Calu3 (cell line): ENCODE measurements at regions of chr9 and their contacts with region 1.

Region 1: DNA sequence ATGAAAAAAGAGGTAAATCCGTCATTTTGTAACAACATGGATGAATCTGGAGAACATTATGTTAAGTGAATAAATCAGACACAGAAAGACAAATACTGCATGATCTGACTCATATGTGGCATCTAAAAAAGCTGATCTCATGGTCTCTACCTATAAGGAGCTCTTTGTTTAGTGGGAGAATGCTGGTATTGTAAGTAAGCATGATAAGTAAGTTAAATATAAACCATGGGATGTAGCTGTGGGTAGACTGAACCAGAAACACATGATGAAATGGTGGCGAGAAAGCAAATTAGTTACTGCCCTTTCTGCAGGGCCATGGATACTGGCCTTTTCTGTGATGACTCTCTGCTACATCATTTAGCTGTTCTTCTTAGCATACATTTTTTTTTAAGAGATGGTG is 66.4 kb upstream of the RUSC2 start:
- DNase-seq: peak; percentile 7
- H3K4me3 Mint-ChIP-seq: peak overlapping the region; percentile 10
- H3K27ac Mint-ChIP-seq: peak overlapping the region; percentile 95
- H3K4me1 Mint-ChIP-seq: peaks cover 45% of the 10 kb centered on the region
- H3K27me3 Mint-ChIP-seq: no peaks in the 10 kb centered on the region
- CTCF ChIP-seq: no peak

Region 2: DNA sequence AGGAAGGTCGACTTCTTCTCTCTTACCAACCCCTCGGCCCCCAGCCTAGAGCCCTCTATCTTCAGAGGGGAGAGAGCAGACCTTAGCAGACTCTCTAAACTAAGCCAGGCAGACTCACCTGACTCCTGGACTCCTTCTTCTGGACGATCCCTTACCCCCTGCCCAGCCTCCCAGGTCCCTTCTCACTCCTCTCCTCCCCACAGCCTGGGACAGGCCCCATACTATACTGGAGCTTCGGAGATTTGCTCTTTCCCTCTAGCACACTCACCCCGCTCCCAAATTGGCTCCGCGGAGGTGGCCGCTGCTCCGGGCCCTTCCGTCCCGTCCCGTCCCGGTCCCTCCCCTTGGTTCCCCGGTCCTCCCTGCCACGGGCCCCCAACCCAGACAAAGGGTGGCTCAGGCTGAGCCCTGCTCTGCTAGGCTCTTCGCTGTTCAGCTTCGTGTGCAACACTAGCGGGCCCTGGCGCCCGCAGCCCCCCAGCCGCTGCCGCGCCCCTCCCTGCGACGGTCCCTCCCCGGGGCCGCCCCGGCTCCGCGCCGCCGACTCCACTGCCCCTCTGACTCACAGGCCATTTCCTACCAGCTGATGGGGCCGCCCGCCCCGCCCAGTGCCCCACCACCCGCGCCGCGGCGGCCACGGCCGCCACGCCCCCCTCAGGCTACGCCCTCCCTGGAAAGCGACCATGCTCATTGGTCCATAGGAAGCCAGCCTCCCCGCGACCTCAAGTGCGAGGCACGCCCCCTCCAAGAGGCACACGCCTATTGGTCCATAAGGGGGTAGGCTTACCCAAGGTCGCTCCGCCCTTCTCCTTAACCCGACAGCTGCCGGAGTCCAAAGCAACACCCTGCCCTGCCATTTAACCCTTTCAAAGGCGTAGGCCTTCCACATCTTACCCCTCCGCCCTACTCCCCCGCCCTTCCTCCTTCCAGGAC is 312.2 kb before region 1 on chr9:
- CTCF ChIA-PET with region 1: no interaction called
- intact Hi-C with region 1: loop called (anchors 5 kb)
- DNase-seq: peak; percentile 92
- H3K4me3 Mint-ChIP-seq: peak overlapping the region; percentile 67
- H3K27ac Mint-ChIP-seq: peak overlapping the region; percentile 40
- H3K4me1 Mint-ChIP-seq: peaks cover 38% of the 10 kb centered on the region
- H3K27me3 Mint-ChIP-seq: no peaks in the 10 kb centered on the region
- CTCF ChIP-seq: no peak

Region 3: GRCh38 chr9:35313916-35314315 is 109.6 kb before region 1 on chr9:
- CTCF ChIA-PET with region 1: no interaction called
- intact Hi-C with region 1: no loop called
- DNase-seq: no peak
- H3K4me3 Mint-ChIP-seq: no peak overlapping the region
- H3K27ac Mint-ChIP-seq: no peak overlapping the region
- H3K4me1 Mint-ChIP-seq: no peaks in the 10 kb centered on the region
- H3K27me3 Mint-ChIP-seq: no peaks in the 10 kb centered on the region
- CTCF ChIP-seq: no peak